CD4-positive, alpha-beta T cell (primary cell): ENCODE measurements at regions of chr18 and their contacts with region 1.

Region 1: DNA sequence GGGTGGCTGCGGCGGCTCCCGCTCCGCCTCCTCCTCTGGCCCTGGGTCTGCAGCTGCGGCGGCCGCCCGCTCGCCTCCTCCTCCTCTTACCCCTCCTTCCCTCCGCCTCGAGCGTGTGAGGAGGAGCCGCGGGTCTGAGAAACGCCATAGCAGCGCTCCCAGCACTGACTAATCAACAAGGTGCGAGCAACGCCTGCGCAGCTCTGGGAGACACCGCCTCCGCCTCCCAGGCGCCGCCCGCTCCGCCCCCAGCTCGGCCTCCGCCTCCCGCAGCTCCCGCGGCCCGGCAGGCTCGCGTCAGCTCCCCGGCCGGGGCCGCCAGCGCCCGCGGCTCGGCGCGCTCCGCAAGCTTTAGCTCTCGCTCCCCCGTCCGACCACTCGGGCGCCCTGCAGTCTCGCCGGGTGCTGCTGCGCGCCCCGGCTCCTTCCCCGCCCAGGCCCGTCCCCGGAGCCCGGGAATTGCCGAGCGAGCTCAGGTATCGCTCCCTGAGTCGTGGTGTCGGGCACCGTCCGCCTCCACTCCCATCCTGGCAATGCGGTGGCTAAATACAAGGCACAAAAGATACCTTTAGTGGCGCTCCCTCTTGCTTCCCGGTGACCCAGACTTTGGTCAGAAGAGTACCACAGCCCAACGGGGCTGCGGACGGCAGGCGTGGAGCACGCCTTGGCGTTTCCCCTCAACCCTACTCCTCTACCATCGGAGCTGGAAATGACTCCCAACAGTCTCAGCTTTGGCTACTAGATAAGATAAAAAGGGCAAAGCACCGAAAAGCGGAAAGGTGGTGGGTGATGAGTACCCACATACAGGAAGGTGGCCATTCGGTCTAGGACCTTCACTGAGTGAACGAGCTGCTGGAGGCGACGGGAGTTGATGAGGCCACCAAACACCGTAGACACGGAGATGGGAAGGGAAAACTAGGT is at the start of gene GAREM1:
- DNase-seq: peak; percentile 60 to 92 (median 75)
- ATAC-seq: peak; percentile 91
- H3K4me3 ChIP-seq: peak within 1 kb of the TSS; percentile 55
- H3K4me3 Mint-ChIP-seq: peak within 1 kb of the TSS; percentile 88
- H3K27ac ChIP-seq: no peak within 1 kb of the TSS
- H3K27ac Mint-ChIP-seq: no peak within 1 kb of the TSS
- H3K4me1 ChIP-seq: peaks cover 21% of the 10 kb centered on the region
- H3K4me1 Mint-ChIP-seq: peaks cover 26% of the 10 kb centered on the region
- H3K27me3 ChIP-seq: peaks cover 18 to 42% of the 10 kb centered on the region in 2 experiments
- H3K27me3 Mint-ChIP-seq: peaks cover 37% of the 10 kb centered on the region
- CTCF ChIP-seq: no peak
- total RNA-seq, gene GAREM1: 0.14 to 0.34 TPM

Region 2: DNA sequence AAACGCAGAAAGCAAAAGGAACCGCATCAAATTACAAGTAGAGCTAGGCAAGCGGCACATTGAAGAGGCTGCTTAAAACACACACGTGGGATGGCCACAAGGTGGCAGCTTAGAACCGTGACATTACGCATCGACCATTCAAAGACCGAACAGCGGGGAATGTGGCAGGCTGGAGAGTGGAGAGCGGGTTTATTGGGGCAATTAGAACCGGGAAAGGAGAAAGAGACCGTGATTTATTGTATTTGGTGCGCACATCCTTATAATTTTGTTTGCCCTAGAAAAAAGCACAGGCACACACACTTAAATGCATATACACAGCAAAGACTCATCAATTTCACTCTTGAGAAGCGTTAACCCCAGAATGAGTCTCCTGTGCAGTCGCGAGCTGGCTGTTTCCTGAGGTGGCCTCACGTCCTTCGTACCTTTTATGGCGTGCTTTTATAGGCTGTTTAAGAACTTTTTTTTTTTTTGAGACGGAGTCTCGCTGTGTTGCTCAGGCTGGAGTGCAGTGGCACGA is 312.8 kb before region 1 on chr18:
- CTCF ChIA-PET with region 1: no interaction called
- POLR2A ChIA-PET with region 1: interaction called, 7 read pairs
- intact Hi-C with region 1: loop called in 1 of 2 experiments (anchors 10 kb)
- DNase-seq: peak; percentile 53 to 87 (median 60)
- ATAC-seq: peak; percentile 93
- H3K4me3 ChIP-seq: peak overlapping the region; percentile 45
- H3K4me3 Mint-ChIP-seq: peak overlapping the region; percentile 71
- H3K27ac ChIP-seq: no peak overlapping the region
- H3K27ac Mint-ChIP-seq: no peak overlapping the region
- H3K4me1 ChIP-seq: peaks cover 7% of the 10 kb centered on the region
- H3K4me1 Mint-ChIP-seq: peaks cover 5% of the 10 kb centered on the region
- H3K27me3 ChIP-seq: peaks cover 0 to 3% of the 10 kb centered on the region in 2 experiments
- H3K27me3 Mint-ChIP-seq: peaks cover 9% of the 10 kb centered on the region
- CTCF ChIP-seq: peak; percentile 86

Region 3: DNA sequence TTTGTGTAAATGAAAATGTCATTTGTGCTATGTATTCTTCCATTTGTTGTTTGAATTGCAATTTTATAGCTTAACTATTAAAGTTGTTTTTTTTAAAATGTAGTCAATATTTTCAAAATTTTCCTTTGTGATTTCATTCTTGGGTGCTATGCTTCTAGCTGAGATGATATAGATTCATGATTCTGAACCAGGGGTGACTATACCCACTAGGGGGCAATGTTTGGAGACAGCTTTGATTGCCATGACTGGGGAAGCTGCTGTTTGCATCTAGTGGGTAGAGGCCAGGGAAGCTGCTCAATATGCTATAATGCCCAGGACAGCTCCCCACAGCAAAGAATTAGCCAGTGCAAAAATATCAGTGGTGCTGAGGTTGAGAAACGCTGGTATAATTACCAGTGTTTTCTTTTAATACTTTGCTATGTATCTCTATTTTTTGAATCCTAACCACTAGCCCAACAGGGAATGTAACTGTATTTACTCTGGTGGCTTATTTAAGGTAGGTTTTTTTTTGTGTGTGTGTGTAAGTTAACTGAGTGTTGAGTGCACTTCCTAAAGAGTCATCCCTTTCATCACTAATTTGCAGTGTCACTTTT is 181.4 kb before region 1 on chr18:
- CTCF ChIA-PET with region 1: interaction called, 3 read pairs
- POLR2A ChIA-PET with region 1: no interaction called
- intact Hi-C with region 1: loop called in 1 of 2 experiments (anchors 10 kb)
- DNase-seq: peak in 8 of 14 experiments; percentile 2 to 50 (median 22)
- ATAC-seq: no peak
- H3K4me3 ChIP-seq: no peak overlapping the region
- H3K4me3 Mint-ChIP-seq: no peak overlapping the region
- H3K27ac ChIP-seq: no peak overlapping the region
- H3K27ac Mint-ChIP-seq: no peak overlapping the region
- H3K4me1 ChIP-seq: no peaks in the 10 kb centered on the region
- H3K4me1 Mint-ChIP-seq: no peaks in the 10 kb centered on the region
- H3K27me3 ChIP-seq: peaks cover 0 to 3% of the 10 kb centered on the region in 2 experiments
- H3K27me3 Mint-ChIP-seq: peaks cover 20% of the 10 kb centered on the region
- CTCF ChIP-seq: peak; percentile 49

Region 4: GRCh38 chr18:32530947-32531651 is 60.1 kb after region 1 on chr18:
- CTCF ChIA-PET with region 1: no interaction called
- POLR2A ChIA-PET with region 1: interaction called, 4 read pairs
- intact Hi-C with region 1: loop called in 1 of 2 experiments (anchors 2 kb)
- DNase-seq: peak in 4 of 14 experiments; percentile 13 to 54 (median 30)
- ATAC-seq: peak; percentile 93
- H3K4me3 ChIP-seq: no peak overlapping the region
- H3K4me3 Mint-ChIP-seq: no peak overlapping the region
- H3K27ac ChIP-seq: no peak overlapping the region
- H3K27ac Mint-ChIP-seq: peak overlapping the region; percentile 24
- H3K4me1 ChIP-seq: no peaks in the 10 kb centered on the region
- H3K4me1 Mint-ChIP-seq: peaks cover 23% of the 10 kb centered on the region
- H3K27me3 ChIP-seq: no peaks in the 10 kb centered on the region
- H3K27me3 Mint-ChIP-seq: peaks cover 7% of the 10 kb centered on the region
- CTCF ChIP-seq: no peak

Region 5: DNA sequence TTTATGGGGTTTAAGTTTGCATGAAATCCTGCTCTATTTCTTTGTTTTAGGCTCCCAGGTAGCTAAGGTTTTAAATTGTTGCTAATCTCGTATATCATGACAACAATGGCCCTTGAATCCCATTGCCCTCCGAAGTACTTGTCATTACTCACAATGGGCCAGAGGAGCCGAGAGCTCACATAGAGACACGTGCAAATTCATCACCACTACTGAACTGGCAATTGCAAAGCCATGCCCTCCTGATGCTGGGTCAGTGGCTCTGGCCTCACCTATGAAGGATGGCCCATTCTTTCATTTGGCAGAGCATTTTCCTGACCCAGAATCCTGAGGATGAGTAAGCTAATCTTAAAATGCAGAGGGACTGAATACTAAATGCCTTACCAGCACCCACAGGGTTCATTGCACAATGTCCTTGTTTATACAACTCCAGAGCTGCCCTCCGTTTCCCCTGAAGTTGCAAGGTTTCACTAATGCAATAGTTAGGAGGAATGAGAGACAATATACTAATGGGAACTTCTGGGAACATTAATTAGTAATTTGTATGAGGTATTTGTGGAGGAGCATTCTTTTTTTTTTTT is 71.3 kb after region 1 on chr18:
- CTCF ChIA-PET with region 1: no interaction called
- POLR2A ChIA-PET with region 1: no interaction called
- intact Hi-C with region 1: no loop called
- DNase-seq: no peak
- ATAC-seq: no peak
- H3K4me3 ChIP-seq: no peak overlapping the region
- H3K4me3 Mint-ChIP-seq: no peak overlapping the region
- H3K27ac ChIP-seq: no peak overlapping the region
- H3K27ac Mint-ChIP-seq: no peak overlapping the region
- H3K4me1 ChIP-seq: no peaks in the 10 kb centered on the region
- H3K4me1 Mint-ChIP-seq: no peaks in the 10 kb centered on the region
- H3K27me3 ChIP-seq: peaks cover 0 to 2% of the 10 kb centered on the region in 2 experiments
- H3K27me3 Mint-ChIP-seq: peaks cover 15% of the 10 kb centered on the region
- CTCF ChIP-seq: no peak